Adrenal gland (tissue), 19 donors: ENCODE measurements at regions of chr20 and their contacts with region 1.

Region 1: GRCh38 chr20:49713753-49714712 is at the start of gene B4GALT5:
- DNase-seq: peak; percentile 52 to 82 (median 74)
- H3K4me3 ChIP-seq: peak within 1 kb of the TSS; percentile 56 to 97 (median 78)
- H3K27ac ChIP-seq: peak within 1 kb of the TSS; percentile 81 to 97 (median 84)
- H3K4me1 ChIP-seq: peaks cover 31 to 34% of the 10 kb centered on the region in 2 donors
- H3K27me3 ChIP-seq: no peaks in the 10 kb centered on the region
- CTCF ChIP-seq: no peak
- POLR2A ChIP-seq: peak; percentile 49 to 78
- total RNA-seq, gene B4GALT5: 47.4 to 137 (median 75.2) TPM

Region 2: GRCh38 chr20:49496553-49497397 is 217.3 kb before region 1 on chr20:
- intact Hi-C with region 1: no loop called
- DNase-seq: no peak
- H3K4me3 ChIP-seq: no peak overlapping the region
- H3K27ac ChIP-seq: no peak overlapping the region
- H3K4me1 ChIP-seq: no peaks in the 10 kb centered on the region
- H3K27me3 ChIP-seq: no peaks in the 10 kb centered on the region
- CTCF ChIP-seq: no peak
- POLR2A ChIP-seq: no peak

Region 3: DNA sequence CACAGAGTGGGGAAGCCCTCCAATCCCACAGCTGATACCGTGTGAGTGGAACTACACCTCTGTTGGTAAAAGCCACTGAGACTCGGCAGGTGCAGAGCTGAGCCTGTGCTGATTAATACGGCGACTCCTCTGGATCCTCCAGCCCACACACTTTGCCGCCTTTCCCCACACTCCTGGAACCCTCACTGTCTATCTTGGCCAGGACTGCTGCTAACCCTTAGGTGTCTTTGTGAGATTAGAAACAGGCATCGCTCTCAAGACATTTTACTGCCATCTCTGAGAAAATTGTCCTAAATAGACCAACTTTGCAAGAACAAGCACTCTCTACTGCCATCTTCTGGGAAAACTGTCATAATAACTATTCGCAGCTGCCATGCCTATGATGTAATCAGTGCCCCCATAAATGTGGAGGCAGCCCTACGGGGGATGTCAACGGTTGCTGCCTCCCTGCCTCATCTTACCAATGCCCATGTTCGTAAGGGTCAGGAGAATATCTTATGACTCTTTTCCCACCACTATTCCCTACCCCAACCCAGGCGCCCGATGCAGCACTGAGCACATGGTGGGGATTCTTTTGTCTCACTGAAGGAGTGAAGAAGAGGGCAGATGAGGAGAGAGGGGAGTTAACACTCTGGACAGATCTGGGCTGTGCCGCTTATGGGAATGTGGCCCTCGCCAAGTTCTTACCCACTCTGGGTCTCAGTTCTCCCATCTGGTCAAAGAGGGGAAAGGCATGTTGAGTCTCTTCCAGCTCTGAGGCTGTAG is 205.4 kb before region 1 on chr20:
- intact Hi-C with region 1: no loop called
- DNase-seq: no peak
- H3K4me3 ChIP-seq: no peak overlapping the region
- H3K27ac ChIP-seq: no peak overlapping the region
- H3K4me1 ChIP-seq: peaks cover 0 to 8% of the 10 kb centered on the region in 2 donors
- H3K27me3 ChIP-seq: peaks cover 7% of the 10 kb centered on the region
- CTCF ChIP-seq: peak in 5 of 6 experiments; percentile 42 to 71 (median 56)
- POLR2A ChIP-seq: no peak

Region 4: DNA sequence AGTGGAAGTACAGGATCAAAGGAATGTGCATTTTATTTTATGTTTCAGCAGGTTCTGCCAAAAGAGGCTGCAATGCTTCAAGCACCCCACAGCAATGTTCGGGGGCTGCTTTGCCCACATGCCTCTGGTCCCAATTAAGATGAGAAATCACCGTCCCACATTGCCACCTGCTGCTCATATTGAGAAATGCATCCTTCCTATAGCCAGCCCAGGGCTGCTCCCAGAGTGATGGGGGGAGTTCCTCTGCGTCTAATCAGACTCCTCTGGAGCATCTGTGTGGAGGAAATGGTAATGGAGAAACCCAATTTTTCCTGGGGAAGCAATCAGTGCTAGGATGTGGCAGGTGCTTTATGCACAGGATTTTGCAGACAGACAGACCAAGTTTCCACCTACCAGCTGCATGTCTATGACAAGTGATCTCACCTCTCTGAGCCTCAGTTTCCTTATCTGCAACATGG is 179.7 kb before region 1 on chr20:
- intact Hi-C with region 1: no loop called
- DNase-seq: peak; percentile 38 to 74 (median 44)
- H3K4me3 ChIP-seq: no peak overlapping the region
- H3K27ac ChIP-seq: no peak overlapping the region
- H3K4me1 ChIP-seq: no peaks in the 10 kb centered on the region
- H3K27me3 ChIP-seq: peaks cover 4% of the 10 kb centered on the region
- CTCF ChIP-seq: peak; percentile 59 to 77 (median 70)
- POLR2A ChIP-seq: no peak

Region 5: GRCh38 chr20:49821870-49822331 is 107.9 kb after region 1 on chr20:
- intact Hi-C with region 1: loop called in 1 of 2 experiments (anchors 10 kb)
- DNase-seq: peak in 3 of 7 donors; percentile 35 to 54 (median 44)
- H3K4me3 ChIP-seq: no peak overlapping the region
- H3K27ac ChIP-seq: no peak overlapping the region
- H3K4me1 ChIP-seq: peaks cover 7 to 25% of the 10 kb centered on the region in 2 donors
- H3K27me3 ChIP-seq: no peaks in the 10 kb centered on the region
- CTCF ChIP-seq: peak in 1 of 6 experiments; percentile 22
- POLR2A ChIP-seq: no peak